OCI-LY7 (cell line): ENCODE measurements at regions of chr10 and their contacts with region 1.

Region 1: GRCh38 chr10:92742331-92743228 is 52.8 kb downstream of the HHEX start:
- DNase-seq: peak; percentile 95
- H3K4me3 ChIP-seq: peak overlapping the region; percentile 53
- H3K27ac ChIP-seq: peak overlapping the region; percentile 91
- H3K4me1 ChIP-seq: peaks cover 53% of the 10 kb centered on the region
- CTCF ChIP-seq: no peak

Region 2: DNA sequence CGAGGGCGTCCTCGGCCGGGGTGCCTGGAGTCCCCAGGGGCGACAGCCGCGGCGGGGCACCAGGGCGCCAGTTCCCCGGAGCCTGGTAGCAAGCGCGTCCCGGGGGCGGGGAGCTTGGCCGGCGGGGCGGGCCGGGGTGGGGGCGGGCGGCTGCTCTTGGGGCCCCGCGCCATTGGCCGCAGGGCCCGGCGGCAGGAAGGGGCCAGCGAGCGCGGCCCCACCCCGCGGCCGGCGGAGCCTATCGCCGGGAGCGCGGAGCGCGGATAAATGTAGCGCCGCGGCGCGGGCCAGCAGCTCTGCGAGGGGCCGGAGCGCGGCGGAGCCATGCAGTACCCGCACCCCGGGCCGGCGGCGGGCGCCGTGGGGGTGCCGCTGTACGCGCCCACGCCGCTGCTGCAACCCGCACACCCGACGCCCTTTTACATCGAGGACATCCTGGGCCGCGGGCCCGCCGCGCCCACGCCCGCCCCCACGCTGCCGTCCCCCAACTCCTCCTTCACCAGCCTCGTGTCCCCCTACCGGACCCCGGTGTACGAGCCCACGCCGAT is 52.8 kb before region 1 on chr10 and contains the start of gene HHEX:
- CTCF ChIA-PET with region 1: no interaction called
- POLR2A ChIA-PET with region 1: interaction called, 4 read pairs
- intact Hi-C with region 1: loop called (anchors 1 kb)
- DNase-seq: peak; percentile 74
- H3K4me3 ChIP-seq: peak within 1 kb of the TSS; percentile 62
- H3K27ac ChIP-seq: no peak within 1 kb of the TSS
- H3K4me1 ChIP-seq: peaks cover 33% of the 10 kb centered on the region
- CTCF ChIP-seq: no peak
- total RNA-seq, gene HHEX: 2.1 and 2.8 TPM in 2 replicates

Region 3: DNA sequence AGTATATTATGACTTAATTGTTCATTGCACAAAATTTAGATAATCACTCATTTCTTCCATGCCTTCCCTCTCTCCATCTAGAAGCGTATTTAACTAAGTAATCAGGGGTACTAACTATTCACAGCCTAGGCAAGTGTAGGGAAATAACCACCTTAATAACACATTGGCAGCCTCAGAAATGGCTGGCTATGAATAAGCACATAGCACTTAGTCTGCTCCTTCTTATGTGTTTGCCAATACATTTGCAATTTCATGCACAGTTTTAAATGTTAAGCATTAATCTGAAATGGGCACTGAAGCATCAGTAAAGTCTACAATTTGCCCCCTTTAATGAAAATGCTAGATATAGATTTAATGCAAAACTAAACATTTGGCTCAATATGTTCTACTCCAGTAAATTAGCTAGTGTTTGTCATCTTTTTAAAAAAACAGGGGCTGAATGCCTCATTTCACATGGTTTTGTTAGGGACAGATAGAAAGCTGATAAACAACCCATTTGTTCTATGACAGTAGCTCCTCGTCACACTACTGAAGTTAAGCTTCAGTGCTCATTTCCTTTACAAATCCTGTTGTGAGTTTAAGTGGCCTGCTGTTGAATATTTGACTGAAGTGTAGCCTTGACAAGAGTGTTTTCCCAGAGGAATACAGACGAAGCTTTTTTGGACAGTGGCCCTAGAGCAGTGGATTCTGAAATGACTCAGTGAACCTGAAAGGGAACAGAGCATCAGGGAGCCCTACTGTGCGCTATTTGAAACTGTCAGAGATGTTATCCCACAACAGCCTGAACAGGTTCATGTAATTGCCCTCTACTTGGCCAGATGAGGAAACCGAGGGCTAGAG is 22.4 kb before region 1 on chr10:
- CTCF ChIA-PET with region 1: interaction called, 3 read pairs
- POLR2A ChIA-PET with region 1: interaction called, 15 read pairs
- intact Hi-C with region 1: no loop called
- DNase-seq: peak; percentile 48
- H3K4me3 ChIP-seq: no peak overlapping the region
- H3K27ac ChIP-seq: no peak overlapping the region
- H3K4me1 ChIP-seq: peaks cover 67% of the 10 kb centered on the region
- CTCF ChIP-seq: no peak

Region 4: GRCh38 chr10:92729886-92730285 is 12.7 kb before region 1 on chr10:
- CTCF ChIA-PET with region 1: interaction called, 5 read pairs
- POLR2A ChIA-PET with region 1: interaction called, 39 read pairs
- intact Hi-C with region 1: loop called (anchors 1 kb)
- DNase-seq: peak; percentile 90
- H3K4me3 ChIP-seq: peak overlapping the region; percentile 30
- H3K27ac ChIP-seq: peak overlapping the region; percentile 79
- H3K4me1 ChIP-seq: peaks cover 76% of the 10 kb centered on the region
- CTCF ChIP-seq: no peak